Calu3 (cell line): ENCODE measurements at regions of chr5 and their contacts with region 1.

Region 1: DNA sequence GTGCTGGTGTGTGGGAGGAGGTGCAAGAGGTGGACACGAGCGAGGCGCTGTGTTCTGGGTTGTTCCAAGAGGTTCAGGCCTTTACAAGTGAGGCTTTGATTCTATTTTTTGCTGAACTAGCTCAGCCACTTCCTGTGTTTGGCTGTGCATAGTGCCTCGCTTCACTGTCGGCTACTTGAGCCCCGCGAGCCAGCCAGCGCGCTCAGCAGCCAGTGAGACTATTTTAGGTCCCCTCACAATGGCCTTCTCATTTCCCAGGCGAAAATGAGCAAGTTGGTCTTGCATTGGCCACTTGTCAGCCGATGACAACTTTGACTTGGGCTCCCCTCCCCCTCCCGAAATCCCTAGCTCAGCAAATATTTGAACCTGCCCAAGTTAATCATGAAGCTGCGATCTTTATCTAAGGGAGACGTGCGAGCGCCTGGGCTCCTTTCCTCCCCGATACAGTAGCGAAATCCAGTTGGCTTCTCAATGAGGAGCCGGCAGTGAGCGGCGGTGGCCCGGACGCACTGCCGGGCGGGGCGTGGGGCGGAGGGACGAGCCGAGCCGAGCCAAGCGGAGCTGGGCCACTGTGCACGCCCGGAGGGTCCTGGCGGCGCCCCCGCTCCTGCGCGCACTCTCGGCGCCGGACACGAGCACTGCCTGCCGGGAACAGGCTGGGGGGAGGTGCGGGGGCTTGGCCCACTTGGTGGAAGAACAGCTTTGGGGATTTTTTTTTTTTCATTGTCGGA is 72.6 kb downstream of the PIK3R1 start:
- DNase-seq: peak; percentile 75
- H3K4me3 Mint-ChIP-seq: peak overlapping the region; percentile 79
- H3K27ac Mint-ChIP-seq: peak overlapping the region; percentile 84
- H3K4me1 Mint-ChIP-seq: peaks cover 59% of the 10 kb centered on the region
- H3K27me3 Mint-ChIP-seq: no peaks in the 10 kb centered on the region
- CTCF ChIP-seq: no peak

Region 2: DNA sequence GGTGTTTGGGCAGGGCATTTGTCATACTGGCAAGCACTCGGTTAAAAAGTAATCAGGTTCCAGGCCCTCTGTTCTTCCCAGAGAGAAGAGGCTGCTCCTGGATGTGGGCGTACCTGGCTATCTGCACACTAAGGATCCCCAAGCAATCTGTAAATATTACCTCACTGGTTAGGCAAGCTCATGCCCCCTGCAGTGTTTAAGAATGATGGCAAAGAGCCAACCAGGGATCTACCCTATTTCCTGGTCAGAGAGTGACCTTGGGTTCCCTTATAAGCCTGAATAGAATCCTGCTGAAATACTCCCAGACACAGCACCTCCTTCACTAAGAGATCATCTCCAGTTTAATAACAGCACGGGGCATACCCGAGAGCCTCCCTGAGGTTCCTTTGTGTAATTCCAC is 108.6 kb after region 1 on chr5:
- CTCF ChIA-PET with region 1: interaction called, 10 read pairs
- intact Hi-C with region 1: loop called (anchors 1 kb)
- DNase-seq: peak; percentile 80
- H3K4me3 Mint-ChIP-seq: peak overlapping the region; percentile 61
- H3K27ac Mint-ChIP-seq: peak overlapping the region; percentile 92
- H3K4me1 Mint-ChIP-seq: peaks cover 28% of the 10 kb centered on the region
- H3K27me3 Mint-ChIP-seq: no peaks in the 10 kb centered on the region
- CTCF ChIP-seq: no peak

Region 3: GRCh38 chr5:68576805-68577204 is 288.7 kb after region 1 on chr5:
- CTCF ChIA-PET with region 1: no interaction called
- intact Hi-C with region 1: loop called (anchors 10 kb)
- DNase-seq: no peak
- H3K4me3 Mint-ChIP-seq: no peak overlapping the region
- H3K27ac Mint-ChIP-seq: no peak overlapping the region
- H3K4me1 Mint-ChIP-seq: no peaks in the 10 kb centered on the region
- H3K27me3 Mint-ChIP-seq: no peaks in the 10 kb centered on the region
- CTCF ChIP-seq: no peak

Region 4: DNA sequence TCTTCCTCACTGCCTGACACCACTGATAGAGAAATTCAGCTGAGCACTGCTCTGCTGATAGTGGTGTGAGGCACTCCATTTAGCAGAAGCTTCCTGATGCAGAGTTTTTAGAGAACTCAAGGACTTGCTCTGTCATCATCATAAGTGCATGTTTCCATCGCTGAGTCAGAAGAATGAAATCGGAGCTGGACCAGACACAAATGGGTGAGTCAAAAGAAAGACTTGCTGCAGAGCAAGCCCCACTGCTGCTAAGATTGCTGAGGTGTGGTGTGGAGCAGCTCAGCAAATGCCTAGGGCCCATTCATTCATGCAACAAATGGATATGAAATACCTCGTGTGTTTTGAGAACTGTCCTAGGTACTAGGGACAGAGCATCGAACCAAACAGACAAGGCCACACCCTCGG is 395.5 kb after region 1 on chr5:
- CTCF ChIA-PET with region 1: no interaction called
- intact Hi-C with region 1: loop called (anchors 5 kb)
- DNase-seq: peak; percentile 78
- H3K4me3 Mint-ChIP-seq: no peak overlapping the region
- H3K27ac Mint-ChIP-seq: peak overlapping the region; percentile 34
- H3K4me1 Mint-ChIP-seq: peaks cover 36% of the 10 kb centered on the region
- H3K27me3 Mint-ChIP-seq: no peaks in the 10 kb centered on the region
- CTCF ChIP-seq: no peak

Region 5: GRCh38 chr5:68962757-68963484 is 674.8 kb after region 1 on chr5:
- CTCF ChIA-PET with region 1: no interaction called
- intact Hi-C with region 1: loop called (anchors 2 kb)
- DNase-seq: peak; percentile 77
- H3K4me3 Mint-ChIP-seq: no peak overlapping the region
- H3K27ac Mint-ChIP-seq: no peak overlapping the region
- H3K4me1 Mint-ChIP-seq: peaks cover 8% of the 10 kb centered on the region
- H3K27me3 Mint-ChIP-seq: no peaks in the 10 kb centered on the region
- CTCF ChIP-seq: peak; percentile 71